CD8-positive, alpha-beta T cell (primary cell): ENCODE measurements at regions of chr1 and their contacts with region 1.

Region 1: GRCh38 chr1:23216771-23217420 is 406 bp downstream of the HTR1D start:
- DNase-seq: peak in 8 of 9 experiments; percentile 2 to 57 (median 32)
- ATAC-seq: peak; percentile 61
- H3K4me3 ChIP-seq: peak overlapping the region in 1 of 2 experiments; percentile 19
- H3K4me3 Mint-ChIP-seq: peak overlapping the region; percentile 62
- H3K27ac ChIP-seq: no peak overlapping the region
- H3K27ac Mint-ChIP-seq: no peak overlapping the region
- H3K4me1 ChIP-seq: peaks cover 9% of the 10 kb centered on the region
- H3K4me1 Mint-ChIP-seq: peaks cover 7% of the 10 kb centered on the region
- H3K27me3 ChIP-seq: peaks cover 16% of the 10 kb centered on the region in 2 experiments
- H3K27me3 Mint-ChIP-seq: peaks cover 65% of the 10 kb centered on the region
- CTCF ChIP-seq: peak; percentile 67

Region 2: DNA sequence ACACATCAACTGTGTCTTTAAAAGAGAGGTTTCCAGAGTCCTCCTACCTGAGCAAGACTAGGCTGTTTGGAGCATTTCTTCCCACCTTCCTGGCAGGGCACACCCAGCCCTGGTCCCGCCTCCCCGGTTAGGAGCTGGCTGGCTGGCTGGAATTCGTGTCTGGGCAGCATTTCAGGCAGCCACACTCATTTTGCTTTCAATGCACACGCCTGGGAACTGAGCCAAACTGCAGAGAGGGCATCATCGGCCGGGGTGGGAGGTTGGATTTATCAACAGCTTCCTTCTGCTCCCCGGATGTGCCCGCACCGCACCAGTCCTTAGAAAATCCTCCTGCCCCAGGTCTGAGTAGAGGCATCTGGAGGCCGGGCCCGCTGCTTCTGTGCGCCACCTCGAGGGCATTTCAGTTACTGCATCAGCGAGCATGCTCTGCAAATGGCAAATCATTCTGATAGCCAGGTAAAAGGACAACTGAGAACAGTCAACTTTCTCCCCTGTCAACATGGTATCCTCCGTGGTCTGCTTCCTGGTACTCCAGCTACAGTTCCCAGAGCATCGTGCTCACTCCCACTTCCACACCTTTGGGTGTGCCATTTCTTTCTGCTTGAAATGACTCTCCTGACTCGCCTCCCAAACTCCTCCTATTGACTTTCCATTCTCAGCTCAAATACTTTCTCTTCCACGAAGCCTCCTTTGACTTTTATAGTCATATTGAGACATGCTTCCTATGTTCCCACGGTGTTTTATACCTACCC is 187.0 kb after region 1 on chr1:
- CTCF ChIA-PET with region 1: interaction called, 4 read pairs
- POLR2A ChIA-PET with region 1: no interaction called
- intact Hi-C with region 1: loop called in 1 of 2 experiments (anchors 2 kb)
- DNase-seq: peak; percentile 69 to 88 (median 78)
- ATAC-seq: peak; percentile 100
- H3K4me3 ChIP-seq: no peak overlapping the region
- H3K4me3 Mint-ChIP-seq: no peak overlapping the region
- H3K27ac ChIP-seq: no peak overlapping the region
- H3K27ac Mint-ChIP-seq: no peak overlapping the region
- H3K4me1 ChIP-seq: peaks cover 4% of the 10 kb centered on the region
- H3K4me1 Mint-ChIP-seq: peaks cover 9% of the 10 kb centered on the region
- H3K27me3 ChIP-seq: no peaks in the 10 kb centered on the region
- H3K27me3 Mint-ChIP-seq: no peaks in the 10 kb centered on the region
- CTCF ChIP-seq: peak; percentile 87

Region 3: GRCh38 chr1:23664837-23665795 is 448.2 kb after region 1 on chr1:
- CTCF ChIA-PET with region 1: no interaction called
- POLR2A ChIA-PET with region 1: no interaction called
- intact Hi-C with region 1: loop called in 1 of 2 experiments (anchors 10 kb)
- DNase-seq: peak in 2 of 9 experiments; percentile 32 to 39
- ATAC-seq: no peak
- H3K4me3 ChIP-seq: no peak overlapping the region
- H3K4me3 Mint-ChIP-seq: no peak overlapping the region
- H3K27ac ChIP-seq: no peak overlapping the region
- H3K27ac Mint-ChIP-seq: no peak overlapping the region
- H3K4me1 ChIP-seq: no peaks in the 10 kb centered on the region
- H3K4me1 Mint-ChIP-seq: peaks cover 6% of the 10 kb centered on the region
- H3K27me3 ChIP-seq: no peaks in the 10 kb centered on the region
- H3K27me3 Mint-ChIP-seq: no peaks in the 10 kb centered on the region
- CTCF ChIP-seq: peak; percentile 29